ENCODE measurements at regions of chr4 and their contacts with region 1.

Region 1: GRCh38 chr4:88378691-88379559 is at the start of gene HERC6:
- DNase-seq: peak; percentile 65 to 81
- H3K4me3 ChIP-seq: peak within 1 kb of the TSS; percentile 97
- H3K27ac ChIP-seq: peak within 1 kb of the TSS; percentile 85 to 91
- H3K4me1 ChIP-seq: no peaks in the 10 kb centered on the region
- H3K27me3 ChIP-seq: no peaks in the 10 kb centered on the region
- CTCF ChIP-seq: peak; percentile 64 to 67

Region 2: GRCh38 chr4:87938746-87939145 is 440.2 kb before region 1 on chr4:
- intact Hi-C with region 1: no loop called
- DNase-seq: no peak
- H3K4me3 ChIP-seq: no peak overlapping the region
- H3K27ac ChIP-seq: no peak overlapping the region
- H3K4me1 ChIP-seq: peaks cover 0 to 7% (median 0%) of the 10 kb centered on the region in 4 donors
- H3K27me3 ChIP-seq: no peaks in the 10 kb centered on the region
- CTCF ChIP-seq: no peak

Region 3: GRCh38 chr4:88291003-88291402 is 87.9 kb before region 1 on chr4:
- intact Hi-C with region 1: loop called (anchors 10 kb)
- DNase-seq: no peak
- H3K4me3 ChIP-seq: peak overlapping the region in 1 of 2 donors; percentile 13
- H3K27ac ChIP-seq: peak overlapping the region; percentile 67 to 77
- H3K4me1 ChIP-seq: peaks cover 0 to 32% (median 14%) of the 10 kb centered on the region in 4 donors
- H3K27me3 ChIP-seq: no peaks in the 10 kb centered on the region
- CTCF ChIP-seq: no peak

Region 4: DNA sequence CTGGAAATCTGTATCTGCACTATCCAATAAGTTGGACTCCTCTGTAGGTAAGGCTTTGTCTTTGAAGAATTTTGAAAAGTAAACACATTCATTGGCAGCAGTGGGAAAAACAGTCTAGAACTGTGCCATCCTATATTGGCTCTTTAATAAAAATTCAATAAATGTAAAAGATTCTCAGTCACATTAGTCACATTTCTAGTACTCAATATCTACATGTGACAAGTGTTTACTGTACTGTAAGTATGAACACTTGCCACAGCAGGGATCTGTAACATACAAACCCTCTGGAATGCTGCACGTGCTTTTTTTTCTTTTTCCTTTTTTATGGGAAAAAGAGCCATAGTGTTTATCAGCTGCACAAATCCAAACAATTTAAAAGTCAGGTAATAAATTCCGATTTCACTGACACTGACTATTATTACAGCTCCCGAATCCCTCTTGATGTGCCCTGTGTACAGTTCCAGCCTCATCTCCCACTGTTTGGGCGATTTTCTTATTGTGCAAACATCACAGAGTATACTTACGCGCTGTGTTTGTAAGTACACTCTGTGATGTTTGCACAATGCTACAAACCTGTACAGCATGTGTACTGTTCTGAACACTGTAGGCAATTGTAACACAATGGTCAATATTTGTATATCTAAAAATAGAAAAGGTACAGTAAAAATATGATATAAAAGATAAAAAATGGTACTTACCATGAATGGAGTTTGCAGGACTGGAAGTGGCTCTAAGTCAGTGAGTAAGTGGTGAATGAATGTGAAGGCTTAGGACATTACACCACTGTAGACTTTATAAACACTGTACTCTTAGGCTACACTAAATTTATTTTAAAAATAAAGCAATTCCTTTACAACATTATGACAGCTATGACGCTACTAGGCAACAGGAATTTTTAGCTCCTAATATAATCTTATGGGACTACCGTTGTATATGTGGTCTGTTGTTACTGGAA is 135.9 kb after region 1 on chr4:
- intact Hi-C with region 1: loop called (anchors 2 kb)
- DNase-seq: no peak
- H3K4me3 ChIP-seq: no peak overlapping the region
- H3K27ac ChIP-seq: no peak overlapping the region
- H3K4me1 ChIP-seq: peaks cover 0 to 3% (median 1%) of the 10 kb centered on the region in 4 donors
- H3K27me3 ChIP-seq: no peaks in the 10 kb centered on the region
- CTCF ChIP-seq: no peak

Measured in tibial artery (tissue), 4 donors.